Mammary epithelial cell (primary cell): ENCODE measurements at regions of chr19 and their contacts with region 1.

Region 1: DNA sequence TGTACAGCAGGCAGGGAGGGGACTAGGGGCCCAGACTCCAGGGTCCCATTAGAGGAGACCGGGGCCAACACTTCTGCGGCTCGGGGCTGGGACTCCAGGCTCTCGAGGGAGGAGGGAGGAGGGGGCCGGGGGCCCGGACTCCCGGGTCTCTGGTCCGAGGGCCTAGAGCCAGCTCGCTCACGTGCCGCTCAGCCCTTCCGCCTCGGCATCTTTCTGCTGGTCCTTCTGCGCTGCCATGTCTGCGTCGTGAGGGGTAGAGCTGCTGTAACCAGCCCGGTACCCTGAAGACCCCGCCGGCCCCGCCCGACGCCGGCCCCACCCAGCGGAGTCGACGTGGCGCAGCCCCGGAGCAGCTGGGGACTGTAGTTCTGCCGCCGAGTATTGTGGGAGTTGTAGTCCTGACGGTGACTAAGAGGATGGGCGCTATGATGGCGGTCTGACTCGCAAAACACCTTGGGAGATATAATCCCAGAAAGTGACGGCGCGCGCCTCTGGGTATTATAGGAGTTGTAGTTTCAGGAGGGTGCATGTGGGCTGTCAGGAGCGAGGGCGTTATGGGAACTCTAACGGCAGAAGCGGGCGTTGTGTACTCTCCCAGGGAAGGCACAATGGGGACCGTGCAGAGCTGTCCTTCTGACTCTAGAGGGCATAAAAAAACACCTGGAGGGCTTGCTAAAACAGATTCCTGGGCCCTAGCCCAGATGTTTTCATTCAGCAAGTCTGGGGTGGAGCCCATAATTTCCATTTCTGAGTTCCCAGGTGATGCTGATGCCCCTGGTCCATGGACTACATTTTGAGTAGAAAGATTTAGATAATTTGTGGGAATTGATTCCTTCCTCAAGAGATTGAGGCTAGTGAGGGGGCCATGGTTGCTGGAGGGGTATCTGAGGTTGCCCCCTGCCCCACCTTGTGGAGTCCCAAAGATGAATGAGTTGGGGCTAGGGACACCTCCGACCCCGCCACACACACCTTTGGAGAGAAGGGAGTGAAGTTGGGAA is at the start of gene RABAC1:
- DNase-seq: peak; percentile 86
- H3K4me3 ChIP-seq: peak within 1 kb of the TSS; percentile 62 to 93 (median 76)
- H3K27ac ChIP-seq: peak within 1 kb of the TSS; percentile 77
- H3K4me1 ChIP-seq: peaks cover 14% of the 10 kb centered on the region
- H3K27me3 ChIP-seq: no peaks in the 10 kb centered on the region
- CTCF ChIP-seq: peak; percentile 6 to 30
- total RNA-seq, gene RABAC1: 74.8 to 154 TPM

Region 2: GRCh38 chr19:41753936-41754529 is 205.3 kb before region 1 on chr19:
- CTCF ChIA-PET with region 1: no interaction called
- dilution Hi-C with region 1: loop called (anchors 10 kb)
- in situ Hi-C with region 1: no loop called
- intact Hi-C with region 1: no loop called
- DNase-seq: peak; percentile 19
- H3K4me3 ChIP-seq: no peak overlapping the region
- H3K27ac ChIP-seq: no peak overlapping the region
- H3K4me1 ChIP-seq: no peaks in the 10 kb centered on the region
- H3K27me3 ChIP-seq: no peaks in the 10 kb centered on the region
- CTCF ChIP-seq: peak; percentile 78 to 79

Region 3: DNA sequence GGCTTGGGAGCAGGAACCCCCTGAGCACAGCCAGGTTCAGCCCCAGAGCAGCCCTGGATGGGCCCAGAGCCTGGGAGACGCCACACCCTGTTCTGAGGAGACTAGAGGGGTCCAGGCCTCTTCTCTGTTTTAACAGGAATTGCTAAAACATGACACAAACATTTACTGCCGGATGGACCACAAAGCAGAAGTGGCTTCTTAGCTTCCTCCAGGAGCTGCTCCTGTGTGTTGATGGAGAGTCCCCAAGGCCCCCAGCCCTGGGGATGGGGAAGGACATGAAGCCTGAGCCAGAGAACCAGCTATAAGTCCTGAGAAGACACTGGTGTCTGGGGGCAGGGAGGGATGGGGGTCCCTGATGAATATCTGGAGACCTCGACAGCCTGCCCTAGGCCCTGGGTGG is 148.3 kb before region 1 on chr19:
- CTCF ChIA-PET with region 1: no interaction called
- dilution Hi-C with region 1: loop called (anchors 10 kb)
- in situ Hi-C with region 1: no loop called
- intact Hi-C with region 1: no loop called
- DNase-seq: no peak
- H3K4me3 ChIP-seq: no peak overlapping the region
- H3K27ac ChIP-seq: no peak overlapping the region
- H3K4me1 ChIP-seq: no peaks in the 10 kb centered on the region
- H3K27me3 ChIP-seq: no peaks in the 10 kb centered on the region
- CTCF ChIP-seq: no peak

Region 4: DNA sequence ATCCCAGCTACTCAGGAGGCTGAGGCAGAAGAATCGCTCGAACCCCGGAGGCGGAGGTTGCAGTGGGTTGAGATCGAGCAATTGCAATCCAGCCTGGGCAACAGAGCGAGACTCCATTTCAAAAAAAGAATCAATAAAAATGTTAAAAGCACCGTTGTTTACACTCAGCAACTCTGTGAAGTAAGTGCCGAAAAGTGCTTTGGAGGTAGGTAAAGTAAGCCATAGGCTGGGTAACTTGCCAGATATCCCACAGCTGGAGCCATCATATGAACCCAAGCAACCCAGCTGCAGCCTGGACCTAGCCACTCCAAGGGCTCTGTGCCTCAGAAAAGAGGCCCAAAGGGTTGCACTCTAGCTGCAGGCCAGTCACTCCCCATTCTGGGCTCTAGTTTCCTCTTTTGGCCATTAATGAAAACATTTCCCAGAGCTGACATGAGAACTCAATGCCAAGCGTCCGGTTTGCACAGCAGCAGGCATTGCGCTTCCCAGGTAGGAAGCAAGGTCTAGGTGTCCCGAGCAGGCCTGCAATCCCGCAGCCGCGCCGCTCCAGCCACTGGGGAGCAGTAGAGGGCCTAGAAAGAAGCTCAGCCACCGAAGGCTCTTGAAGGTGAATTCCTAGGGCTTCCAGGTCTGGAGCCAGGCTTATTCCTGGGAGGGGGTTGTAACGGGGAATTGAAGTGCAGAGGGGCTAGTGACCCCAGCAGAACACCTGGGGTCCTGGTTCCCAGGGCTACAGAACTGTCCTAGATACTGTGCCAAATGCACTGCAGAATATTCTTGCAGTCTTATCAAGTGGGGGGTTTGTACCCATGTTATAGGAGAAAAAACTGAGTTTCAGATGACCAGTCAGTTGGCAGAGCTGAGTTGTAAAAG is 86.3 kb before region 1 on chr19:
- CTCF ChIA-PET with region 1: no interaction called
- dilution Hi-C with region 1: loop called (anchors 5 kb)
- in situ Hi-C with region 1: loop called in 1 of 2 experiments (anchors 5 kb)
- intact Hi-C with region 1: loop called (anchors 1 kb)
- DNase-seq: peak; percentile 77
- H3K4me3 ChIP-seq: no peak overlapping the region
- H3K27ac ChIP-seq: no peak overlapping the region
- H3K4me1 ChIP-seq: no peaks in the 10 kb centered on the region
- H3K27me3 ChIP-seq: no peaks in the 10 kb centered on the region
- CTCF ChIP-seq: peak; percentile 79 to 83

Region 5: GRCh38 chr19:41998246-41999020 is 39.1 kb after region 1 on chr19:
- CTCF ChIA-PET with region 1: interaction called, 4 read pairs
- dilution Hi-C with region 1: no loop called
- in situ Hi-C with region 1: no loop called
- intact Hi-C with region 1: loop called (anchors 2 kb)
- DNase-seq: no peak
- H3K4me3 ChIP-seq: no peak overlapping the region
- H3K27ac ChIP-seq: no peak overlapping the region
- H3K4me1 ChIP-seq: peaks cover 6% of the 10 kb centered on the region
- H3K27me3 ChIP-seq: peaks cover 11% of the 10 kb centered on the region
- CTCF ChIP-seq: peak; percentile 38 to 71

Region 6: DNA sequence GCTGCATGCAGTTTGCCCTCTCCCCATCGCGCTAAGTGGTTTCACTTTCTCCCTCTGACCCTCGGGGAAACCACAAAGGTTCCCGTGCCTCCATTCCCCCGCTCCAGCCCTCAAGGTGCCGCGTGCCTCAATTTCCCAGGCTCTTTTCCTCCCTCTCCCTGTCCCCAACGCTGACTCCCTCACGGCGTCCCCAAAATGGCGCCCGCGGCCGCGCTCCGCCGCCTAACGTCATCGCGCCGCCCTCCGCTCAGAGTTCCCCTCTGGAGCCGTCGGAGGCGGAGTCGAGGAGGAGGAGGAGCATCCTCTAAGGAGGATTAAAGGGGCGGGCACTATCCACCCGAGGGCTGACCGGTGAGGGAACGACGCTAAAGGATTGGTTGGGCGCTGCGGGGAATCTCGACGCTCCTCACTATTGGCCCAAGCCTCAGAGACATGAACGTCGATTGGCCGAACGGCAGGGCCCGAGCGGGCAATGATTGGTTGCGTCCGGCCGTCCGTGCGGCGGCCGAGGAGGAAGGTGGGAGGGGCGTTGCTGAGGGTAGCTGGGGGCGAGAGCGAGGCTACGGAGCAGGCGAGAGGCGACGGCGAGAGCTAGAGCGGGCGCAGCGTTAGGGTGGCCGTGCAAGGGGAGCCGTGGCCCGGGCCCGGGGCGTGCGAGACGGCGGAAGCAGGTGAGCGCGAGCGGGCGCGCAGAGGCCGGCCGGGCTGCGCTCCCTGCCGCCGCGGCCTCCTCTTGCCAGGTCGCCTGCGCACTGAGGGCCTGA is 116.4 kb after region 1 on chr19 and contains the start of gene ZNF574:
- CTCF ChIA-PET with region 1: no interaction called
- dilution Hi-C with region 1: no loop called
- in situ Hi-C with region 1: no loop called
- intact Hi-C with region 1: loop called (anchors 5 kb)
- DNase-seq: peak; percentile 100
- H3K4me3 ChIP-seq: peak within 1 kb of the TSS; percentile 83 to 89 (median 86)
- H3K27ac ChIP-seq: peak within 1 kb of the TSS; percentile 94
- H3K4me1 ChIP-seq: peaks cover 29% of the 10 kb centered on the region
- H3K27me3 ChIP-seq: no peaks in the 10 kb centered on the region
- CTCF ChIP-seq: no peak
- total RNA-seq, gene ZNF574: 16.8 to 19.7 TPM

Region 7: GRCh38 chr19:42254989-42255765 is 295.8 kb after region 1 on chr19 and contains the start of gene ERF:
- CTCF ChIA-PET with region 1: no interaction called
- dilution Hi-C with region 1: loop called (anchors 10 kb)
- in situ Hi-C with region 1: no loop called
- intact Hi-C with region 1: no loop called
- DNase-seq: peak; percentile 91
- H3K4me3 ChIP-seq: peak within 1 kb of the TSS; percentile 95 to 99 (median 98)
- H3K27ac ChIP-seq: peak within 1 kb of the TSS; percentile 91
- H3K4me1 ChIP-seq: peaks cover 32% of the 10 kb centered on the region
- H3K27me3 ChIP-seq: no peaks in the 10 kb centered on the region
- CTCF ChIP-seq: no peak
- total RNA-seq, gene ERF: 101 to 139 TPM